Naive thymus-derived CD4-positive, alpha-beta T cell (primary cell): ENCODE measurements at regions of chr9 and their contacts with region 1.

Region 1: DNA sequence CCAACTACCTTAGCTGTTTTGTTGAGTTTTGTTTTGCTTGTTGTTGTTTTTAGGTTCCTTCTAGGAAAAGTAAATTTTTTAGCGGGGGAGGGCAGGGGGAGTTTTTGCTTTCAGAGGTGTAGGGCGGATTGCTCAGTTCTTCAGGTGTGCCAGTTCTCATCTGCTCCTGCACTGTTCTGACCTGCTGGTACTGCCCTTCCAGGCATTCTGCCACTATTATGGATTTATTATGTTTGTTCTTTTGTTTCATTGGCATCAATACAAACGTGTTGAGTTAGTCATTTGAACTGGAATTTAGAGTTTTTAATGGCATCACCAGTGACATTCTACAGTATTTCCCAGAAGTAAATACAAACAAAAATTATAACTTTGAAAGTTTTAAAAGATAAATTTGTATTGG is 26.0 kb downstream of the ERCC6L2 start:
- DNase-seq: no peak
- ATAC-seq: no peak
- H3K4me3 ChIP-seq: no peak overlapping the region
- H3K4me3 Mint-ChIP-seq: peak overlapping the region in 1 of 10 donors; percentile 16
- H3K27ac ChIP-seq: no peak overlapping the region
- H3K27ac Mint-ChIP-seq: no peak overlapping the region
- H3K4me1 ChIP-seq: peaks cover 0 to 5% of the 10 kb centered on the region in 2 donors
- H3K4me1 Mint-ChIP-seq: peaks cover 20 to 68% (median 42%) of the 10 kb centered on the region in 7 donors
- H3K27me3 ChIP-seq: no peaks in the 10 kb centered on the region
- H3K27me3 Mint-ChIP-seq: no peaks in the 10 kb centered on the region

Region 2: DNA sequence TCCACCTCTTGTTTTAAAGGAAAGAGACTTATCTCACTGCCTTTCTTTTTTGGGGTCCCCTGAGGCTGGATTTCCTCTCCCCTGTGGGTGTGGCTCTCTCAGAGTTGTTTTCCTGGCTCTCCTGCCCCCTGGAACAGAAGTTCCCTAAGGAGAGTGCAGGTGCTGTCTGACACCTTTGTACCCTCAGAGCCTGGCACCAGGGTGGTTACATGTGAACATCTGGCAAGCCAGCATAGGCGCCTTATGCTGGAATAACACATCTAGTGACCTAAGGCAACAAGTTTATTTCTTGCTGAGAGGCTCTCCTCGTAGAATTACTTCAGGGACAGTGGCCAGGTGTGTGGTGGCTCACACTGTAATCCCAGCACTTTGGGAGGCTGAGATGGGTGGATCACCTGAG is 211.8 kb before region 1 on chr9:
- CTCF ChIA-PET with region 1: no interaction called
- POLR2A ChIA-PET with region 1: no interaction called
- intact Hi-C with region 1: no loop called
- DNase-seq: no peak
- ATAC-seq: no peak
- H3K4me3 ChIP-seq: no peak overlapping the region
- H3K4me3 Mint-ChIP-seq: no peak overlapping the region
- H3K27ac ChIP-seq: no peak overlapping the region
- H3K27ac Mint-ChIP-seq: no peak overlapping the region
- H3K4me1 ChIP-seq: no peaks in the 10 kb centered on the region
- H3K4me1 Mint-ChIP-seq: no peaks in the 10 kb centered on the region
- H3K27me3 ChIP-seq: no peaks in the 10 kb centered on the region
- H3K27me3 Mint-ChIP-seq: peaks cover 0 to 24% (median 0%) of the 10 kb centered on the region in 5 donors

Region 3: GRCh38 chr9:95822583-95823431 is 78.7 kb before region 1 on chr9:
- CTCF ChIA-PET with region 1: no interaction called
- POLR2A ChIA-PET with region 1: no interaction called
- intact Hi-C with region 1: no loop called
- DNase-seq: peak in 1 of 9 donors; percentile 45
- ATAC-seq: no peak
- H3K4me3 ChIP-seq: no peak overlapping the region
- H3K4me3 Mint-ChIP-seq: peak overlapping the region in 1 of 10 donors; percentile 65
- H3K27ac ChIP-seq: no peak overlapping the region
- H3K27ac Mint-ChIP-seq: peak overlapping the region in 2 of 9 donors; percentile 6 to 70
- H3K4me1 ChIP-seq: no peaks in the 10 kb centered on the region
- H3K4me1 Mint-ChIP-seq: peaks cover 0 to 41% (median 4%) of the 10 kb centered on the region in 7 donors
- H3K27me3 ChIP-seq: no peaks in the 10 kb centered on the region
- H3K27me3 Mint-ChIP-seq: peaks cover 0 to 47% (median 0%) of the 10 kb centered on the region in 5 donors

Region 4: DNA sequence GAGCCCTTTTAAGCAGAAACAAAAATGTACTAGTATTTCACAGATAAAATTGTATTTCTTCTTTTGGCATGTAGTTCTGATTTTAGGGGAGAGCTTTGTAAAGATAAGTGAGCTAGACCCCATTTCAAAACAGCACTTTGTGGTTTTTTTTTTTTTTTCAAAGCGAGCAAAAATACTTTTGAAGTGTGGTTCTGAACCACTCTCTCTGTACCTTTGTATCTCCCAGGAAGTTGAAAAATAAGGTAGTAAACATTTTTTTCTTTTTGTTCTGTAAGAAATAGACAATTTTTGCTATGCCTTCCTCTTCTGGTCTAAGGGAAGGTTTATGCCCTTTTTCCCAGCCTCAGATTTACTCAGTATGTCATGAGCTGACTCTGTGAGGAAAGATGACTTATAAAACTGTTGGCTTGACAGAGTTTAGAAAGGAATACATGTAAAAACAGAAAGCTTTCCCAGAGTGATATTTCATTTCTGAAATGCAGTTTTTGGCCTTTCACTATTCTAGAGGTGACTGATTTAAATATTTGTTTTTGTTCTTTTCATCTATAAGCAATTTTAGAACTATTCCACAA is 13.5 kb before region 1 on chr9:
- CTCF ChIA-PET with region 1: no interaction called
- POLR2A ChIA-PET with region 1: interaction called, 6 read pairs
- intact Hi-C with region 1: loop called (anchors 1 to 2 kb)
- DNase-seq: peak in 6 of 9 donors; percentile 38 to 65 (median 56)
- ATAC-seq: peak; percentile 82
- H3K4me3 ChIP-seq: peak overlapping the region; percentile 26
- H3K4me3 Mint-ChIP-seq: peak overlapping the region; percentile 60 to 83 (median 77)
- H3K27ac ChIP-seq: peak overlapping the region; percentile 59
- H3K27ac Mint-ChIP-seq: peak overlapping the region; percentile 81 to 94 (median 89)
- H3K4me1 ChIP-seq: peaks cover 16 to 56% of the 10 kb centered on the region in 2 donors
- H3K4me1 Mint-ChIP-seq: peaks cover 22 to 89% (median 83%) of the 10 kb centered on the region in 7 donors
- H3K27me3 ChIP-seq: no peaks in the 10 kb centered on the region
- H3K27me3 Mint-ChIP-seq: no peaks in the 10 kb centered on the region

Region 5: DNA sequence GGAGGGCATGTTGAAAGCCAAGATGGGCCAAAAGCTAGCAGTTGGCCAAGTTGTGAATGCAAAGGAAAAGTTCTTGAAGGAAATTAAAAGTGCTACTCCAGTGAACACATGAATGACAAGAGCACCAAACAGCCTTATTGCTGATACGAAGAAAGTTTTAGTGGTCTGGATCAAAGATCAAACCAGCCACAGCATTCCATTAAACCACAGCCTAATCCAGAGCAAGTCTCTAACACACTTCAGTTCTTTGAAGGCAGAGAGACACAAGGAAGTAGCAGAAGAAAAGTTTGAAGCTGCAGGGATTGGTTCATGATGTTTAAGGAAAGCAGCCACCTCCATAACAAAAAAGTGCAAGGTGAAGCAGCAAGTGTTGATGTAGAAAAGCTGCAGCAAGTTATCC is 45.6 kb after region 1 on chr9:
- CTCF ChIA-PET with region 1: no interaction called
- POLR2A ChIA-PET with region 1: no interaction called
- intact Hi-C with region 1: no loop called
- DNase-seq: no peak
- ATAC-seq: no peak
- H3K4me3 ChIP-seq: no peak overlapping the region
- H3K4me3 Mint-ChIP-seq: no peak overlapping the region
- H3K27ac ChIP-seq: no peak overlapping the region
- H3K27ac Mint-ChIP-seq: no peak overlapping the region
- H3K4me1 ChIP-seq: no peaks in the 10 kb centered on the region
- H3K4me1 Mint-ChIP-seq: peaks cover 0 to 28% (median 10%) of the 10 kb centered on the region in 7 donors
- H3K27me3 ChIP-seq: no peaks in the 10 kb centered on the region
- H3K27me3 Mint-ChIP-seq: no peaks in the 10 kb centered on the region

Region 6: DNA sequence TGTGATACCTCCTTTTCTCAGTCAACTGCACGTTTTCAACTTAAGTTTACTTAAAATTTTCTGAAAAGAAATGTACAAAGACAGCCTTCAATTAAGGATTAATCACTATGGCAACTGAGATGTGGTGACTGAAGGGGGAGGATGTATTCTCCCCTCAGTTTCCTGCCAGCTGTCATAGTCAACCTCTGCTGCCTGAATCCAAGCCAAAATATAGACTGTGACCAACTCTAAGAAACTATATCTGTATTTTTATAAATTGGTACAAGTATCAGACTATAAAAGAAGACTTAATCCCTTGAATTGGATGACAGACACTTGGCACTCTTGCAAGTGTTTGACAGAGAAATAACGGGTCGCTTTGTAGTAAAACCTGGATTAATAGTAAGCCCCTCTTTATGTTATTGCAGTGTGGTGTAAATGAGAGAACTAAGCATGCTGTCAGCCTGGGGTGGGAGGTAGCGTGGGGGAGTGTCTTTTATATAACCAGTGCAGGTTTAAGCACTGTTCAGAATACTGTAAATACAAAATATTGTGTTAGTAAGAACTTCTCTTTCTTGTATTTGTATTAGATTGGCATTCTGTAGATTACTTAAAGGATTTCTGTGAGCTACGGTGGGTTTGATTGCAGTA is 80.4 kb after region 1 on chr9:
- CTCF ChIA-PET with region 1: no interaction called
- POLR2A ChIA-PET with region 1: no interaction called
- intact Hi-C with region 1: loop called in 1 of 2 experiments (anchors 5 kb)
- DNase-seq: peak in 7 of 9 donors; percentile 42 to 76 (median 52)
- ATAC-seq: peak; percentile 94
- H3K4me3 ChIP-seq: no peak overlapping the region
- H3K4me3 Mint-ChIP-seq: peak overlapping the region in 8 of 10 donors; percentile 8 to 68 (median 41)
- H3K27ac ChIP-seq: no peak overlapping the region
- H3K27ac Mint-ChIP-seq: peak overlapping the region; percentile 4 to 84 (median 66)
- H3K4me1 ChIP-seq: peaks cover 0 to 11% of the 10 kb centered on the region in 2 donors
- H3K4me1 Mint-ChIP-seq: peaks cover 14 to 38% (median 25%) of the 10 kb centered on the region in 7 donors
- H3K27me3 ChIP-seq: no peaks in the 10 kb centered on the region
- H3K27me3 Mint-ChIP-seq: no peaks in the 10 kb centered on the region

Region 7: GRCh38 chr9:96009690-96010472 is 108.4 kb after region 1 on chr9:
- CTCF ChIA-PET with region 1: no interaction called
- POLR2A ChIA-PET with region 1: no interaction called
- intact Hi-C with region 1: loop called in 1 of 2 experiments (anchors 5 kb)
- DNase-seq: peak in 5 of 9 donors; percentile 44 to 68 (median 62)
- ATAC-seq: peak; percentile 83
- H3K4me3 ChIP-seq: no peak overlapping the region
- H3K4me3 Mint-ChIP-seq: peak overlapping the region; percentile 25 to 75 (median 56)
- H3K27ac ChIP-seq: peak overlapping the region; percentile 68
- H3K27ac Mint-ChIP-seq: peak overlapping the region in 8 of 9 donors; percentile 65 to 98 (median 92)
- H3K4me1 ChIP-seq: peaks cover 43 to 57% of the 10 kb centered on the region in 2 donors
- H3K4me1 Mint-ChIP-seq: peaks cover 0 to 55% (median 24%) of the 10 kb centered on the region in 7 donors
- H3K27me3 ChIP-seq: no peaks in the 10 kb centered on the region
- H3K27me3 Mint-ChIP-seq: no peaks in the 10 kb centered on the region